ENCODE measurements at regions of chr4 and their contacts with region 1.

Region 1: GRCh38 chr4:20299515-20299914 is 47.8 kb downstream of the SLIT2 start:
- DNase-seq: peak in 1 of 2 experiments; percentile 5
- H3K4me3 ChIP-seq: no peak overlapping the region
- H3K4me3 Mint-ChIP-seq: no peak overlapping the region
- H3K27ac Mint-ChIP-seq: no peak overlapping the region
- H3K4me1 ChIP-seq: no peaks in the 10 kb centered on the region
- H3K4me1 Mint-ChIP-seq: no peaks in the 10 kb centered on the region
- H3K27me3 ChIP-seq: no peaks in the 10 kb centered on the region
- H3K27me3 Mint-ChIP-seq: peaks cover 2% of the 10 kb centered on the region
- CTCF ChIP-seq: peak; percentile 33 to 37

Region 2: DNA sequence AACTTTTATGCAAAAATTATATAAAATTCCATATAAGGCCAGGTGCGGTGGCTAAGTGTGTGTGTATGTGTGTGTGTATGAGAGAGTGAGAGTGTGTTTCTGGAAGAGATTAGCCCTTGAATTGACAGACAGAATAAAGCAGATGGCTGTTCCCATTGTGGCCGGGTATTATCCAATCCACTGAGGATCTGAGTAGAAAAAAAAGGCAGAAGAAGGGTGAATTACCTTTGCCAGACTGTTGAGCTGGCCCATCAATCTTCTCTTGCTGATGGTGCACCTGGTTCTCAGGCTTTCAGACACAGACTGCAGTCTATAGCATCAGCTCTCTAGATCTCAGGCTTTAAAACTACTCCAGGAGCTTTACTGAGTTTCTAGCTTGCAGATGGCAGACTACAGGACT is 140.0 kb before region 1 on chr4:
- CTCF ChIA-PET with region 1: no interaction called
- POLR2A ChIA-PET with region 1: no interaction called
- intact Hi-C with region 1: no loop called
- DNase-seq: no peak
- H3K4me3 ChIP-seq: no peak overlapping the region
- H3K4me3 Mint-ChIP-seq: no peak overlapping the region
- H3K27ac Mint-ChIP-seq: no peak overlapping the region
- H3K4me1 ChIP-seq: no peaks in the 10 kb centered on the region
- H3K4me1 Mint-ChIP-seq: no peaks in the 10 kb centered on the region
- H3K27me3 ChIP-seq: no peaks in the 10 kb centered on the region
- H3K27me3 Mint-ChIP-seq: peaks cover 3% of the 10 kb centered on the region
- CTCF ChIP-seq: no peak

Region 3: GRCh38 chr4:20544645-20545044 is 245.1 kb after region 1 on chr4:
- CTCF ChIA-PET with region 1: no interaction called
- POLR2A ChIA-PET with region 1: no interaction called
- intact Hi-C with region 1: loop called (anchors 2 kb)
- DNase-seq: no peak
- H3K4me3 ChIP-seq: no peak overlapping the region
- H3K4me3 Mint-ChIP-seq: no peak overlapping the region
- H3K27ac Mint-ChIP-seq: no peak overlapping the region
- H3K4me1 ChIP-seq: no peaks in the 10 kb centered on the region
- H3K4me1 Mint-ChIP-seq: no peaks in the 10 kb centered on the region
- H3K27me3 ChIP-seq: no peaks in the 10 kb centered on the region
- H3K27me3 Mint-ChIP-seq: peaks cover 3% of the 10 kb centered on the region
- CTCF ChIP-seq: peak; percentile 46

Region 4: DNA sequence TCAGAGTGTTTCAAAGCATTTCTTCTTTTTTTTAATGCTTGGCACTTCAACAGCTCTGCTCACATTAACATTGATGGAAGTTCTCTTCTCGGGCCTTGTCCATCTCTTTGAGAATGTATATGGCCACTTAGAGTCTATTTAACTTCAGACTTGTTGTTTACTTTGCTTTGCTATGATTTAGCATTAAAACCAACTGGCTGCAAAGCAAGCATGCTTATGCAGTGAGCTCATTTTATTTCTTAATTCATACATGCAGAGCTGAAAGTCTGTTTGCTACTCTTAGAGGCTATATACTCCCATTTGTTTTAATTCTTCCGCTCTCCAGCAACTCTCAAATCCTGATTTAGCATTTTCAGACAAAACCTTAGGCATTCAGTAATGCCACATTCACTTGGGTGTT is 293.1 kb after region 1 on chr4:
- CTCF ChIA-PET with region 1: no interaction called
- POLR2A ChIA-PET with region 1: no interaction called
- intact Hi-C with region 1: no loop called
- DNase-seq: no peak
- H3K4me3 ChIP-seq: no peak overlapping the region
- H3K4me3 Mint-ChIP-seq: no peak overlapping the region
- H3K27ac Mint-ChIP-seq: no peak overlapping the region
- H3K4me1 ChIP-seq: no peaks in the 10 kb centered on the region
- H3K4me1 Mint-ChIP-seq: peaks cover 12% of the 10 kb centered on the region
- H3K27me3 ChIP-seq: no peaks in the 10 kb centered on the region
- H3K27me3 Mint-ChIP-seq: no peaks in the 10 kb centered on the region
- CTCF ChIP-seq: no peak

Measured in Caco-2 (cell line).